Activated T-helper 2 cell treated with anti-CD3 and anti-CD28 coated beads, Interferon-gamma antibody, Interleukin-2, Interleukin-4, amounts not matched to agents 10 μg/mL and 5 μg/mL and 100 μg/mL, durations not matched to agents 14 hours and 24 hours and 36 hours (primary cell): ENCODE measurements at regions of chr5 and their contacts with region 1.

Region 1: DNA sequence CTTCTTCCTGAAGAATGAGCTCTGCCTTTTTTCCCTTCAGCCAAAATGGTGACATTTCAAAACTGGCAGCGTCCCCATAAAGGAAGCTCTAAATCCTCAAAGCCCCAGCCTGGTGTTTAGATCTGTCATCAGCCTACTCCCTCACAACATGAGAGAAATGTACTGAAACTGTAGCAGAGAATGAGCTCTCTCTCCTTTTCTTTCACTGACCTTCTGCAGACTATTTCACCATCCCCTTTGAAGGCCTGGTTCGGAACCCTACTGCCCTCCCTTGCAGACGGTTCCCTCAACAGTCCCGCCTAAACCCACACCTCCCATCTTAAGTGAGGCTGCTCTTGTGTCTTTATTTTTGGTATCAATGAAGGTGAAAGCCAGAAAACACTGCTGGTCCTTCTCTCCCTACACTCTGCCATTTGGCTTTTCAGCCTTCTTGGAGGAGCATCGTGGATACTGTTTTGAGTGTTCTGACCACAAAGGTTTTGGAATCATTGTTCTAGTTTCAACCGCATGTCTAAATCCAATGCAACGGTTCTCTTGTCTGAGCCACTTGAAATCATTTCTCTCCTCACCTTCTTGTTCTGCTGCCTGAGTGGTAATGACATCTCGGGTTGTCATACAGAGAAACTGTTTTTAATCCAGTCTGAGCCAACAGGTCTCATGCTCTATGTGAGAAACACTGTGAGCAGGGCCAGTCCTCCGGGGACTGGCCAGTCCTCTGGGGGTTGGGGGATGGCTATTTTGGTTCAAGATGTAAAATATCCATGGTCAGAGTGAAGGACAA is 39.0 kb downstream of the ITK start:
- DNase-seq: no peak
- H3K4me3 Mint-ChIP-seq: peak overlapping the region; percentile 40
- H3K27ac Mint-ChIP-seq: peak overlapping the region; percentile 94
- H3K4me1 Mint-ChIP-seq: peaks cover 79% of the 10 kb centered on the region
- H3K27me3 Mint-ChIP-seq: no peaks in the 10 kb centered on the region

Region 2: DNA sequence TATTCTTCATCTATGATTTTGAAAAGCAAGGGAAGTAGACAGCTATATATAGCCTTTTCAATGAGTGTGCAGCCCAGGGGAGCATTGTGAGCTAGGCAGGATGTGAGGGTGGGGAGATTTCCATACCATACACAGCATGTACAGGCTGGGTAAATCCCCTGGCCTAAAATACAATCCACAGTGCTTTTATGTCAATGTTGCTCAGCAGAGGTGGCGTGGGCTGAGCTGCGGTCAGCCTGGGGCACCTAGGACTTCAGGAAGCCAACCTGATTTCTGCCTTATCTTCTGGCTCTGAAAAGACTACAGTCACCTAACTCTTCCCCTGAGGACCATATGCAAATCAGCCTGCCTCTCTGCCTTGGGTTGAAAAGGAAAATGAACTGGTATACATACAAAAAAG is 47.3 kb before region 1 on chr5:
- intact Hi-C with region 1: loop called (anchors 1 kb)
- DNase-seq: peak; percentile 78
- H3K4me3 Mint-ChIP-seq: peak overlapping the region; percentile 73
- H3K27ac Mint-ChIP-seq: peak overlapping the region; percentile 98
- H3K4me1 Mint-ChIP-seq: peaks cover 72% of the 10 kb centered on the region
- H3K27me3 Mint-ChIP-seq: no peaks in the 10 kb centered on the region

Region 3: GRCh38 chr5:157198277-157198986 is 21.2 kb before region 1 on chr5:
- intact Hi-C with region 1: loop called (anchors 1 kb)
- DNase-seq: no peak
- H3K4me3 Mint-ChIP-seq: peak overlapping the region; percentile 55
- H3K27ac Mint-ChIP-seq: peak overlapping the region; percentile 84
- H3K4me1 Mint-ChIP-seq: peaks cover 85% of the 10 kb centered on the region
- H3K27me3 Mint-ChIP-seq: no peaks in the 10 kb centered on the region

Region 4: GRCh38 chr5:157253547-157253946 is 33.9 kb after region 1 on chr5:
- intact Hi-C with region 1: loop called (anchors 1 kb)
- DNase-seq: no peak
- H3K4me3 Mint-ChIP-seq: peak overlapping the region; percentile 58
- H3K27ac Mint-ChIP-seq: peak overlapping the region; percentile 95
- H3K4me1 Mint-ChIP-seq: peaks cover 87% of the 10 kb centered on the region
- H3K27me3 Mint-ChIP-seq: no peaks in the 10 kb centered on the region

Region 5: DNA sequence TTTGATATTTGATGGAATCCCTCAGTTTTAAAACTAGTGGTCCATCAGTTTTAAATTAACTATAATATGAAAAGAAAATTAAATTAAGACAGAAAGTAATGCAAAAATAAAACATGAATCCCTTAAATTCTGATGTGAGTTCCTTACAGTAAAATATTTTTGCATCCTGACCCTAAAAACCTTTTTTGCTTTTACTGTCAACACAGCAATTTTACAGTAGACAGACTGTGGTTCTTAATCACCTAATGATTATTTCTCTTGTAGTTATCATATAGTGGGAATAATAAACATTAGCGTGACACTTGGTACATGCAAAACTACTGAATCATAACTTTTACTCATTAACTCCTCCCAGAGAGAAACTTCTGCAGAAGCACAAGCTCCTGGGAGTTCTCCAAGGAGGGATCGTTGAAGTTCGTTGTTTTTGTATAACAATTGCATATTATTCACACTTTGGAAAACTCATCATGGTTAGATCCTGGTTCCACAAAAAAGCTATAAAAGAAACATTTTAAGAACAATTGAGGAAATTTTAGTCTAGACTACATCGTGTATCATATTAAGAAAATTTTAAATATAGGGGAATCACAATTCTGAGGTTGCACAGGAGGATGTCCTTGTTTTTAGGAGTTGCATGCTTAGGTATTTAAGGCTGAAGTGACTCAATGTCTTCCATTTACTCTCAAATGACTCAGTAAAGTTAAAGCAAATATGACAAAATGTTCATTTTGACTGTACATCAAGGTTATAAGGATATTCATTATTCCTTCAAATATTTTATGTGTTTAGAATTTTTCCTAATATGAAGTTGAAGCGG is 152.2 kb after region 1 on chr5:
- intact Hi-C with region 1: no loop called
- DNase-seq: no peak
- H3K4me3 Mint-ChIP-seq: no peak overlapping the region
- H3K27ac Mint-ChIP-seq: peak overlapping the region; percentile 64
- H3K4me1 Mint-ChIP-seq: peaks cover 6% of the 10 kb centered on the region
- H3K27me3 Mint-ChIP-seq: no peaks in the 10 kb centered on the region